ENCODE measurements at regions of chr11 and their contacts with region 1.

Region 1: DNA sequence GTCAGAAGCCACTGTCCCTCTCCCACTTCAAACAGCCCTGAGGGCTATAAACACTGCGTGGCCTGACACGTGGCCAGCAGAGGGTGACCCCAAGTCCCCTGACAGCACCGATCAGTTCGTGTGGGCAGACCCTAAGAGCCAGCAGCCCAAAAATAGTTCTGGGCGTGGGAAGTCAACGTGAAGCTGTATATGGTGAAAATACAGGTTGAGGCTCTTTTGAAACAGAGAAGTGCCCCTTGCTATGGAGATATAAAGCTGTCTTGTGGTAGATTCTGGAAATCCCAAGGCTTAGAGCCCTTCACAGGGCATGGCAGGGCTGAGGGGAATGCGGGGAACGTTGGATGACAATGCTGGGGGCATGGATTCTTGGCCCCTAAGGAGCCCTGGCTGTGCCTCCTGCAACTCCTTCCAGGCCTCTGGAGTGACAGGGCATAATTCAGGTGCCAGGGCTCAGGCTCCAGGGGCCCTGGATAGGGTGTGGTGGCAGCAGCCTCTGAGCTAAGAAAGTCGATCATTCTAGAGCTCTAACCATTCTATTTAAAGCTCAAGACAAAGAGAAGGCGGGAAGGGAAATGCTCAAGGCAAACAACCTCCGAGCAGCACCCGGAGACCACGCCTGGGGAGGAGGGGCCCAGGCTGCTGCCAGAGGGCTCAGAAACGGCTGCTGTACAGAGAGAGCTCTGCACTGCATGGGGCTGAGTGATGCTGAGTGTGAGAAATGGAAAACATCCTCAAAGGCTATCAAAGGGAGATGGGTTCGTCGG is 60.4 kb upstream of the CD5 start:
- DNase-seq: peak; percentile 92
- H3K4me3 Mint-ChIP-seq: peak overlapping the region; percentile 68
- H3K27ac Mint-ChIP-seq: peak overlapping the region; percentile 96
- H3K4me1 Mint-ChIP-seq: peaks cover 71% of the 10 kb centered on the region
- H3K27me3 Mint-ChIP-seq: no peaks in the 10 kb centered on the region

Region 2: DNA sequence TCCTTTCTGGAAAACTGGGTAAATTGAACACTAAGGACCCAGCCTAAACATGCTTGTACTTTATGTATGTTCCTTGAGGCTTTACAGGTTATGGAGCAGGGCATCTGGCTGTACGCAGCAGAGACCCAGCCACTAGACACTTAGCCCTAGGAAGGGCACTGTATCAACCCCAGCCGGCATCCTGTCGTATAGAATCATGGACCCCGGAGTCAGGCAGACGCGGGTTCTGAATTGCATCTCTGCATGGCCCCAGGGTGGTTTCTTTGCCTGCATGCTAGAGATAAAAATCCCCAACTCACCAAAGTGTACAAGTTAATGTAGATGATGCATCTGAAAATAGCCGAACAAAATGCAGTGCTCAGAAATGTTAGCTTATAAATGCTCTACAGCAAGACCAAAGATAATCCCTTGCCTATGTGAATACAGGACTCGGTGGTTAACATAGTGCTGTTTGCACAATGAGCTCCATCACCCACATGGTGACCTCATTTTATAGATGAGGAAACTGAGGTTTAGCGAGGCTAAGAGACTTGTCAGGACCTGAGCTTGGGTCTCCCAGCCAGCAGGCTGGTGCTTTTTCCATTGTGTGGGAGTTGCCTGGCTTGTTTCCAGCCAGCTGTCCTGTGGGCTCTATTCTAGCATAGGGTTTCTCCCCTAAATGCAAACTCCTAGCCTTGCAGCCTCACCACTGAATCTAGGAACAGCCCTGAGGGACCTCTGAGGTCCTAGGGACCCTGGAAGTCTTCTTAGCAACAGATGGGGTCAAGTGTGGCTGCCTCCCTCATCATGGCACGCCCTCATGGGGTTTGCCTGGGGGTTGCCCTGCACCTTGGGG is 63.2 kb before region 1 on chr11:
- CTCF ChIA-PET with region 1: interaction called, 4 read pairs
- POLR2A ChIA-PET with region 1: interaction called, 15 read pairs
- intact Hi-C with region 1: no loop called
- DNase-seq: peak; percentile 92
- H3K4me3 Mint-ChIP-seq: peak overlapping the region; percentile 95
- H3K27ac Mint-ChIP-seq: peak overlapping the region; percentile 99
- H3K4me1 Mint-ChIP-seq: peaks cover 71% of the 10 kb centered on the region
- H3K27me3 Mint-ChIP-seq: no peaks in the 10 kb centered on the region

Region 3: DNA sequence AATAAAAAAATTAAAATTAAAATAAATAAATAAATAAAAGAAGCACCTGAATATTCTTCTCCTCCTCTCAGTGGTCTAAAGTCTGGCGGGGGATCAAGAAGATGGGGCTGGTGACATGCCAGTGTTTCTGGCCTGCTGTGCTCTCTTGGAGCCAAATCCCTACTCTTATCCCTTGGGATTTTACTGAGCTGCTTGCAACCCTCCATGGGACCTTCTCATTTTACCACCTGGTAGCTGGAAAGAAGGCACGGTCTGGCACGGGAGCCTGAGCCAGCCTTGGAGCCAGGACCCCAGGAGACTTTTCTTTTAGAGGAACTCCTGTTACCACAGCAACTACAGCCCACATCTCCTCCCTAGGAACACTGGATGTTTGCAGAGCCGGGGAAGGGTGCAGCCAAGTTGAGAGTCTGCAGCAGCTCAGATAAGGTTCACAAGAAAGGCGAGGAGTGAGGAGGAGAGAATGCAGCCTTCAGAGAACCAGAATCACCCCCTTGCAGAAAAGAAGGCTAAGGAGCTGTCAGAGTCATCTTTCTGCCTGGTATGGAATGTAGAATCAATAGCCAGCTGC is 49.0 kb before region 1 on chr11:
- CTCF ChIA-PET with region 1: interaction called, 4 read pairs
- POLR2A ChIA-PET with region 1: interaction called, 18 read pairs
- intact Hi-C with region 1: no loop called
- DNase-seq: peak; percentile 19
- H3K4me3 Mint-ChIP-seq: peak overlapping the region; percentile 68
- H3K27ac Mint-ChIP-seq: peak overlapping the region; percentile 97
- H3K4me1 Mint-ChIP-seq: peaks cover 81% of the 10 kb centered on the region
- H3K27me3 Mint-ChIP-seq: no peaks in the 10 kb centered on the region

Region 4: GRCh38 chr11:61054927-61055562 is 13.1 kb after region 1 on chr11:
- CTCF ChIA-PET with region 1: interaction called, 10 read pairs
- POLR2A ChIA-PET with region 1: interaction called, 85 read pairs
- intact Hi-C with region 1: loop called (anchors 1 kb)
- DNase-seq: peak; percentile 88
- H3K4me3 Mint-ChIP-seq: peak overlapping the region; percentile 46
- H3K27ac Mint-ChIP-seq: peak overlapping the region; percentile 95
- H3K4me1 Mint-ChIP-seq: peaks cover 89% of the 10 kb centered on the region
- H3K27me3 Mint-ChIP-seq: no peaks in the 10 kb centered on the region

Region 5: GRCh38 chr11:61294717-61295595 is 253.0 kb after region 1 on chr11 and contains the start of gene VWCE:
- CTCF ChIA-PET with region 1: no interaction called
- POLR2A ChIA-PET with region 1: no interaction called
- intact Hi-C with region 1: no loop called
- DNase-seq: peak; percentile 81
- H3K4me3 Mint-ChIP-seq: peak within 1 kb of the TSS; percentile 72
- H3K27ac Mint-ChIP-seq: no peak within 1 kb of the TSS
- H3K4me1 Mint-ChIP-seq: peaks cover 32% of the 10 kb centered on the region
- H3K27me3 Mint-ChIP-seq: peaks cover 19% of the 10 kb centered on the region
- total RNA-seq, gene VWCE: 1.1 to 1.4 TPM